ENCODE measurements at regions of chr22 and their contacts with region 1.

Region 1: DNA sequence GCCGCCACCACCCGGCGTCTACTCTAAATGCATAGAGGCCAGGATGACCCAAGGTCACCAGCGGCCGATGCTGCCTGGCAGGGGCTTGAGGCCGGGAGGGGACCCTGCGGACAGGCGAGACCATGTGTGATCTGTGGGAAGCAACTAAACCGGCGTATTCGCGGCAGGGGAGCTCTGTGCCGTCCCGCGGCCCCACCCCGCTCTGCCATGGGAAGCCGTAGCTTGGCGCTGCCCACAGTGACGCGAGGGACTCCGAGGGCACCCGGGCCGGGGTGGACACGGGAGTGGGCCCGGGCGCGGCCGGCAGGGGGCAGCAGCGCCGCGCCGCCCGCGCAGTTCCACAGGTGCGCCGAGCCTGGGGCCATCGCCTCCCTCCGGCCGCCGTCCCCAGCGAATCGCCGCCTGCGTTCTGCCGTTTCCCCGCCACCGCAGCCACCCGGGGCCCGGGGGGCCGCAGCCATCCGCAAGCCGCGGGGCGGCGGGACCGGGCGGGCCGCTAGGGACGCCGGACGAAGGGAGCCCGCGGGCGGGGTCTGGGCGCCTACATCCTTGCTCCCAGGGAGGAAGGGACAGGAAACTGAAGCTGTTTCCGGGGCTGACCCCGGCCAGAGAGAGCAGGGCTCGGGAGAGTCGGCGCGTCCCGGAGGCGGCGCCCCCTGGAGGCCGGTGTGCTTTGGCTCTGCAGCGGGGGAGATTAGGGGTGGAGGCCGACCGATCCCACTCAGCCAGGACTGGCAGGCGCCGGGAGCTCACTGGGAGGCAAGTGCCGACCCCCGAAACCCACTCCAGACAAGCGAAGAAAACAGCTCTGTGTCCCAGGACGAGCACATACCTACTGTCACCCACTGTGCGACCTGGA is 12.5 kb upstream of the HDHD5 start:
- DNase-seq: peak; percentile 89
- H3K4me3 Mint-ChIP-seq: peak overlapping the region; percentile 80
- H3K27ac Mint-ChIP-seq: peak overlapping the region; percentile 56
- H3K4me1 Mint-ChIP-seq: peaks cover 7% of the 10 kb centered on the region
- H3K27me3 Mint-ChIP-seq: no peaks in the 10 kb centered on the region

Region 2: DNA sequence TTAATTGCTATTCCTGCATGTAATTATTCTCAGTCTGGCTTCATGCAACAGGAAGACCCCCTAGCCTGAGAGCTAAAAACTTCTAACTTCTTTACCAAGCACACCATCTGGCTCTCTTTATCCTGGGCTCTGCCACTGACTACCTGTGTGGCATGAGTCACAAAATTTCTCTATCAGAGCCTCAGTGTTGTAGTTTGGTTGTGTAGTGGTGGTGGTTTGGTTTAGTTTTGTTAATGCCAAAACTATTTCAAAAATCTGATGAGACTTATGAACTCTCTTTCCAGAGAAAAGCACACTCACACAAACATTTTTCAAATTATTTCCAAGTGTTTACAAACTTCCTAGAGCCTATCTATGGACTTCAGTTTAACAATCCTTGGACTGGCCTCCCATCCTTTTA is 94.3 kb before region 1 on chr22:
- CTCF ChIA-PET with region 1: interaction called, 125 read pairs
- POLR2A ChIA-PET with region 1: interaction called, 4 read pairs
- intact Hi-C with region 1: loop called (anchors 1 kb)
- DNase-seq: no peak
- H3K4me3 Mint-ChIP-seq: no peak overlapping the region
- H3K27ac Mint-ChIP-seq: no peak overlapping the region
- H3K4me1 Mint-ChIP-seq: peaks cover 17% of the 10 kb centered on the region
- H3K27me3 Mint-ChIP-seq: peaks cover 6% of the 10 kb centered on the region

Region 3: DNA sequence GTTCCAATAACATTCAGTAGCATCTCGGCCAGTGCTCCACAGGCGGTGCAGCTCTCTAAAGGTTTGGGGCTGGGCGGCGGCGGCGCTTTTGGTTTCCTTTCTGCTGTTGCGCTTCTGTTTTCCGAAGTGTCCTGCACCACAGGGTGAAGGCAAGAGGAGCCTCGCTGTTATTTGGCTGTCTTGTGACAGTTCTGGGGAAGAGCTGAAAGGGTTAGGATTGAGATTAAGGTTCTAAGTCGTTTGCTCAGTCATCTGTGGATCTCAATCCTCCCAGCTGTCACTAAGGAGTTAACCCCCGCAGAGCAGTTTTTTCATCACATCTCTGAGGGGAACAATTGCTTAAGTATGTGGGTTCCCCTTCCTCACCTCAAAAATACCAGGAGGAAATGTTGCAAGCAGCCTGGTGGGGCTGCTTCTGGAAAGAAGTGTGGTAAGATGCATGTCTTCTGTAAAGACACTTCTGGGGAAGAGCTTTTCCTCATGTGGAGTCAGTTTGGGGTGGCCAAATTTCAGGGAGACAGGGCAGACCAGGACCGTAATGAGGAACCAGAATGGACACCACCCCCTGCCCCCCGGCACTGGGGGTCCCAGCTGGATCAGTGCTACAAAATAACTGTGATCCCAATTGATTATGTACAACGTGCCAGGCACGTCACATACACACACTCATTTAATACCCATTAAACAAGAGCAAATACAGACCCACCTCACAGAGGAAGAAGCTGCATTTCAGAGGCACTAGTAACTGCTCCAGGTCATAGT is 64.6 kb before region 1 on chr22:
- CTCF ChIA-PET with region 1: interaction called, 11 read pairs
- POLR2A ChIA-PET with region 1: no interaction called
- intact Hi-C with region 1: no loop called
- DNase-seq: peak; percentile 60
- H3K4me3 Mint-ChIP-seq: peak overlapping the region; percentile 32
- H3K27ac Mint-ChIP-seq: peak overlapping the region; percentile 62
- H3K4me1 Mint-ChIP-seq: peaks cover 33% of the 10 kb centered on the region
- H3K27me3 Mint-ChIP-seq: no peaks in the 10 kb centered on the region

Region 4: DNA sequence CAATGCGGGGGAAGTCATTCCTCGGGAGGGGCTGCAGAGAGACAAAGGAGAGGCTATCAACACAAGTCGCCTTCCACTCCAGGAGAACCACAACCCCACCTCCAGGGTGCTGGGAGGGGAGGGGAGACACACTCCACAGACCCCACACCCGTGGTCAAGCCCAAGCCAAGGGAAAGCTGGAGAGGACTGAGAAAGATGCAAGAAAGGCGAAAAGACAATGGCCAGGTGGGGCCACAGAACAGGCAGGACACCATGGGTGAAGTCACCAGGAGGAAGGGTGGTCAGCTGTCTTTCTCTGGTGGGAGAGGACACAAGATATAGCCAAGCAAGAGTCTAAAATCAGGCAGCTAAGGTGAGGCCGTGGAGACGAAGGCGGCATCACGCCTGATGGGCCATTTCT is 28.4 kb before region 1 on chr22:
- CTCF ChIA-PET with region 1: no interaction called
- POLR2A ChIA-PET with region 1: no interaction called
- intact Hi-C with region 1: no loop called
- DNase-seq: no peak
- H3K4me3 Mint-ChIP-seq: no peak overlapping the region
- H3K27ac Mint-ChIP-seq: no peak overlapping the region
- H3K4me1 Mint-ChIP-seq: no peaks in the 10 kb centered on the region
- H3K27me3 Mint-ChIP-seq: no peaks in the 10 kb centered on the region

Region 5: GRCh38 chr22:17158568-17159503 is 12.7 kb before region 1 on chr22 and contains the start of gene HDHD5:
- CTCF ChIA-PET with region 1: interaction called, 121 read pairs
- POLR2A ChIA-PET with region 1: interaction called, 21 read pairs
- intact Hi-C with region 1: loop called (anchors 1 kb)
- DNase-seq: peak; percentile 91
- H3K4me3 Mint-ChIP-seq: peak within 1 kb of the TSS; percentile 80
- H3K27ac Mint-ChIP-seq: peak within 1 kb of the TSS; percentile 84
- H3K4me1 Mint-ChIP-seq: peaks cover 30% of the 10 kb centered on the region
- H3K27me3 Mint-ChIP-seq: no peaks in the 10 kb centered on the region
- total RNA-seq, gene HDHD5: 42.2 to 42.9 TPM

Region 6: DNA sequence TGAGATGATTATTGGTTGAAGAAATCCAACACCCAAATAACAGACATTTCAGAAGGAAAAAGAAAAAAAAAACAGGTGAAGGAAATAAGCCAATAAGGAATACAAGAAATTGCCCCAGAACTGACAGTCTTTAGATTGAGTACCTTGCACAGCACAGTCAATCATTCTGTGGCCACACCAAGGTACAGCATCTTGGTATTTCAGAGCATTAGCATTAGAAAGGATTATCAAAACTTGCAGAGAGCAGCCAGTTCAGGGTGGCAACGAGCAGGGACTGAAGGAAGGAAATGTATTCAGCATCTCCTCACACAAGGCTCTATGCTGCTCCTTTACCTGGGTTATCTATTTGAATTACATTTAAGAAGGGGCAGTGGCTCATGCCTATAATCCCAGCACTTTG is 45.6 kb after region 1 on chr22:
- CTCF ChIA-PET with region 1: interaction called, 15 read pairs
- POLR2A ChIA-PET with region 1: interaction called, 5 read pairs
- intact Hi-C with region 1: loop called (anchors 2 kb)
- DNase-seq: peak; percentile 18
- H3K4me3 Mint-ChIP-seq: peak overlapping the region; percentile 49
- H3K27ac Mint-ChIP-seq: peak overlapping the region; percentile 39
- H3K4me1 Mint-ChIP-seq: peaks cover 67% of the 10 kb centered on the region
- H3K27me3 Mint-ChIP-seq: no peaks in the 10 kb centered on the region